Activated B cell treated with CpG ODN at 0.5 μM for 24 hours (primary cell): ENCODE measurements at regions of chr11 and their contacts with region 1.

Region 1: GRCh38 chr11:64204464-64204989 is 2.0 kb upstream of the FERMT3 start:
- DNase-seq: peak; percentile 49
- ATAC-seq: peak; percentile 22
- H3K4me3 Mint-ChIP-seq: peak overlapping the region; percentile 73
- H3K27ac Mint-ChIP-seq: peak overlapping the region; percentile 83
- H3K4me1 Mint-ChIP-seq: peaks cover 44% of the 10 kb centered on the region
- H3K27me3 Mint-ChIP-seq: no peaks in the 10 kb centered on the region
- CTCF ChIP-seq: no peak

Region 2: DNA sequence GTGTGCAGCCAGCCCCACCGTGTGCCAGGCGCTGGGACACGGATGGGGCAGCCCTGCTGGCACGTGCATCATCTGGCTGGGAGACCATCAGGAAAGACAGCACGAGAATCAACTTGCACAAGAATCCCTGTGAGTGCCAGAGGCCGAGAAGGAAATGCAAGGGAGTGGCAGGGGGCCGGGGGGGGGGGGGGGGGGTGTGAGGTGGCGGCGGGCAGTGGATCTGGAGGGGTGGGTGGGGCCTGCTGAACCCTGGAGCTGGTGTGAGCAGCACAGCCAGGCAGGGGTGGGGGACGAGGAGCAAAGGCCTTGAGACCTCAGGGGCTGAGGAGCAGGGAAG is 182.8 kb before region 1 on chr11:
- CTCF ChIA-PET with region 1: no interaction called
- POLR2A ChIA-PET with region 1: no interaction called
- intact Hi-C with region 1: no loop called
- DNase-seq: no peak
- ATAC-seq: no peak
- H3K4me3 Mint-ChIP-seq: no peak overlapping the region
- H3K27ac Mint-ChIP-seq: no peak overlapping the region
- H3K4me1 Mint-ChIP-seq: no peaks in the 10 kb centered on the region
- H3K27me3 Mint-ChIP-seq: peaks cover 3% of the 10 kb centered on the region
- CTCF ChIP-seq: no peak

Region 3: GRCh38 chr11:64131683-64132190 is 72.8 kb before region 1 on chr11:
- CTCF ChIA-PET with region 1: no interaction called
- POLR2A ChIA-PET with region 1: no interaction called
- intact Hi-C with region 1: no loop called
- DNase-seq: no peak
- ATAC-seq: no peak
- H3K4me3 Mint-ChIP-seq: no peak overlapping the region
- H3K27ac Mint-ChIP-seq: no peak overlapping the region
- H3K4me1 Mint-ChIP-seq: no peaks in the 10 kb centered on the region
- H3K27me3 Mint-ChIP-seq: peaks cover 6% of the 10 kb centered on the region
- CTCF ChIP-seq: no peak

Region 4: GRCh38 chr11:64185816-64186498 is 18.6 kb before region 1 on chr11 and contains the start of gene STIP1:
- CTCF ChIA-PET with region 1: interaction called, 10 read pairs
- POLR2A ChIA-PET with region 1: interaction called, 92 read pairs
- intact Hi-C with region 1: loop called (anchors 2 kb)
- DNase-seq: peak; percentile 93
- ATAC-seq: peak; percentile 87
- H3K4me3 Mint-ChIP-seq: no peak within 1 kb of the TSS
- H3K27ac Mint-ChIP-seq: peak within 1 kb of the TSS; percentile 97
- H3K4me1 Mint-ChIP-seq: peaks cover 27% of the 10 kb centered on the region
- H3K27me3 Mint-ChIP-seq: no peaks in the 10 kb centered on the region
- CTCF ChIP-seq: no peak
- total RNA-seq, gene STIP1: 155 and 159 TPM in 2 replicates

Region 5: GRCh38 chr11:64225612-64226506 is 21.3 kb after region 1 on chr11 and contains the starts of genes NUDT22 and TRPT1:
- CTCF ChIA-PET with region 1: interaction called, 34 read pairs
- POLR2A ChIA-PET with region 1: interaction called, 191 read pairs
- intact Hi-C with region 1: loop called (anchors 1 kb)
- DNase-seq: peak; percentile 95
- ATAC-seq: peak; percentile 56
- H3K4me3 Mint-ChIP-seq: peak within 1 kb of the TSS; percentile 87
- H3K27ac Mint-ChIP-seq: peak within 1 kb of the TSS; percentile 81
- H3K4me1 Mint-ChIP-seq: peaks cover 39% of the 10 kb centered on the region
- H3K27me3 Mint-ChIP-seq: no peaks in the 10 kb centered on the region
- CTCF ChIP-seq: no peak
- total RNA-seq, gene NUDT22: 81.0 and 95.3 TPM in 2 replicates
- total RNA-seq, gene TRPT1: 50.6 and 51.3 TPM in 2 replicates

Region 6: DNA sequence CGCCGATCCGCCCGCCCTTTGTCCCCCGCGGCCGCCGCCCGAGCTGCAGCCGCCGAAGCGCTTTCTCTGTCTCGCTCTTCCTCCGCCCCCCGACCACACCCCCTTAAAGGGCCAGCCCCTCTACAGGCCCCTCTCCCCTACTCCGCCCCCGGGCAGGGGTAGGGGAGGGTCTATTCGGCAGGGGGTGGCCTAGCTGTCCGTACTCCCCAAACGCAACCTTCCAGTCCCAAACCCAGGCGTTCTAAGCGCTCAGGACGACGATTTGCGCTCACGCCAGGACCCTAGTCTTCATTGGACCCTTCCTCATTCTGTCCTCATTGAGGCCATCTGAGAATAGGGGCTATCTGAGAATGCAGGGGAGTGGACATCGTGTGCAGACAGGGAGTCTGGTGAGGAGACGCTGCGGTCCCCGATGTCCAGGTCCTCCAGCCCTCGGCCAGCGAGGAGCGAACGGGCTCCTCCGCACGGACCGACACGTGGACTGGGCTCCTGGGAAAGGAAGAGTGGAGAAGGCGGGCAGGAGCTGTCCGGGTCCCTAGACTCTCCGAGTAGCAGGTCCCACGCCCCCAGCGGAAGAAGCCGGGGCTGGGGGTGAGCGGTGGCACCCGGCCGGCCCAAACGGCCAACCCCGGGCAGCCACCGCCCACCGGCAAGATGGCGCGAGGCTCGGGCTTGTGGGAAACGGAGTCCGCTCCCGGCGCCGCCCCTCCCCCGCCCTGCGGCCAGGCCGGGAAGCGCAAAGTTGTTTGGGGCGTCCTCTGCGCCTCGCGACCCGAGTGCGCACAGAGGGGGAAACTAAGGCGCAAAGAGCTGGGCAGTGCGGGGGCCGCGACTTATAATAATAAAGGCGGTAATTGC is 42.6 kb after region 1 on chr11 and contains the start of gene PPP1R14B:
- CTCF ChIA-PET with region 1: interaction called, 37 read pairs
- POLR2A ChIA-PET with region 1: interaction called, 127 read pairs
- intact Hi-C with region 1: loop called (anchors 1 kb)
- DNase-seq: peak; percentile 78
- ATAC-seq: peak; percentile 63
- H3K4me3 Mint-ChIP-seq: peak within 1 kb of the TSS; percentile 90
- H3K27ac Mint-ChIP-seq: peak within 1 kb of the TSS; percentile 87
- H3K4me1 Mint-ChIP-seq: peaks cover 43% of the 10 kb centered on the region
- H3K27me3 Mint-ChIP-seq: no peaks in the 10 kb centered on the region
- CTCF ChIP-seq: no peak
- total RNA-seq, gene PPP1R14B: 112 and 127 TPM in 2 replicates

Region 7: DNA sequence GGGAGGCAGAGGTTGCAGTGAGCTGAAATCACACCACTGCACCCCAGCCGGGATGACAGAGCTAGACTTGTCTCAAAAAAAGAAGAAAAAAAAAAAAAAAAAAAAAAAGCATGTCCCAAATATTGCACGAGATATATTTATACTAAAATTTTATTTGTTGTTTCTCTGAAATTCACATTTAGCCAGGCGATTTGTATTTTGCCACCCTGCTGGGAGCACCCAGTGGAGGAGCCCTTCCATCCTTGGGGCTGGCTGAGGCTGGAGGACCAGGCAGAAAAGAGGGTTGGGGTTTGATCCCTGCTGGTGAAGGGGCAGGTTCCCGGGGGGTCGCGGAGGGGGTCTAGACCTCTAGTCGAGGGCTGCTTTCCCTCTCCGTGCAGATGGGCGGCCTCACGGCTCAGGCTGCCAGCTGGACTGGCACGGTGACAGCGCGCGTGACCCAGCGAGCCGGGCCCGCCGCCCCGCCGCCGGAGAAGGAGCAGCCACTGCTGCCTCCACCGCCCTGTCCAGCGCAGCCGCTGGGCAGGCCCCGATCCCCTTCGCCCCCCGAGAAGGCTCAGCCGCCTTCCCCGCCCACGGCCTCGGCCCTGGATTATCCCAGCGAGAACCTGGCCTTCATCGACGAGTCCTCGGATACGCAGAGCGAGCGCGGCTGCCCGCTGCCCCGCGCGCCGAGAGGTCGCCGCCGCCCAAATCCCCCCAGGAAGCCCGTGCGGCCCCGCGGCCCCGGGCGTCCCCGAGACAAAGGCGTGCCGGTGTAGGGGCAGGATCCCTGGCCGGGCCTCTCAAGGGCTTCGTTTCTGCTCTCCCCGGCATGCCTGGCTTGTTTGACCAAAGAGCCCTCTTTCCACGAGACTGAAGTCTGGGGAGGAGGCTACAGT is 94.7 kb after region 1 on chr11:
- CTCF ChIA-PET with region 1: interaction called, 147 read pairs
- POLR2A ChIA-PET with region 1: interaction called, 62 read pairs
- intact Hi-C with region 1: loop called (anchors 1 kb)
- DNase-seq: peak; percentile 31
- ATAC-seq: no peak
- H3K4me3 Mint-ChIP-seq: peak overlapping the region; percentile 53
- H3K27ac Mint-ChIP-seq: no peak overlapping the region
- H3K4me1 Mint-ChIP-seq: peaks cover 26% of the 10 kb centered on the region
- H3K27me3 Mint-ChIP-seq: peaks cover 46% of the 10 kb centered on the region
- CTCF ChIP-seq: no peak